Breast epithelium (tissue), 4 donors: ENCODE measurements at regions of chr13 and their contacts with region 1.

Region 1: GRCh38 chr13:113029487-113030258 is 60.7 kb downstream of the MCF2L start:
- DNase-seq: no peak
- H3K4me3 ChIP-seq: no peak overlapping the region
- H3K27ac ChIP-seq: no peak overlapping the region
- H3K4me1 ChIP-seq: no peaks in the 10 kb centered on the region
- H3K27me3 ChIP-seq: no peaks in the 10 kb centered on the region
- CTCF ChIP-seq: peak; percentile 26 to 70 (median 53)
- POLR2A ChIP-seq: no peak

Region 2: DNA sequence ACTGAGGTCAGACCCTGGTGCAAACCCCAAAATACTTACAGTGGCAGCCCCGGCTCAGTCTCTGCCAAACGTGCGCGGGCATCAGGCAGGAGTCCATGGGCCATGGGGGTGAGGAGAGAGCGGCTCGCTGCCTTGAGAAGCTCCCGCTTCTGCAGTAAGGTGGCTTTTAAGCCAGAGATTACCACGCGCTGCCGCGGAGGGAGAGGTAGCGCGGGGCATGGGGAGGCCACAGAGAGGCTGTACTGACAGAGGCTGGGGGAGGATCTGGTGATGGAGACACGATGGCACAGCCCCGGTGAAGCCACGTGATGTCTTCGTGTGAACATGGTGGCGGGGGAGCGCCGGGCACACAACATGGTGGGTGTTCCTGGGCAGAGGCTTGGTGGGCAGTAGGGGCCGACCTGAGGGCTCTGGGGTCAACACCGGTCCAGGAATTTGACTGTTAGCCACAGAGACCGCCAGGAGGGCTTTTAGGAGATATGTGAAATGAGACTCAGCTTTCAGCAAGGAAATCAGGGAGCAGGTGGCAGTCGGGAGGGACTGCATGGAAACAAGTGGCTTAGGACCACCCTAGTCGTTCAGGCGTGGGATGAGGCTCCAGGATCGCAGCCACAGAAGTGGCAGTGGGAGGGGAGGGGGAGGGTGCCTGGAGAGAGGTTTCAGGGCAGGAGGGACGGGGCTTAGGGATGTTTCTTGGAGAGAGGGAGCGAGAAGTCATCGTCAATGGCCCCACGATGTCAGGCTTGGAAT is 36.6 kb before region 1 on chr13:
- intact Hi-C with region 1: loop called (anchors 1 kb)
- DNase-seq: no peak
- H3K4me3 ChIP-seq: no peak overlapping the region
- H3K27ac ChIP-seq: peak overlapping the region in 1 of 2 donors; percentile 29
- H3K4me1 ChIP-seq: peaks cover 0 to 3% of the 10 kb centered on the region in 2 donors
- H3K27me3 ChIP-seq: no peaks in the 10 kb centered on the region
- CTCF ChIP-seq: no peak
- POLR2A ChIP-seq: no peak